ENCODE measurements at regions of chr9 and their contacts with region 1.

Region 1: GRCh38 chr9:34646211-34647083 is at the start of gene GALT:
- DNase-seq: peak; percentile 98
- H3K4me3 Mint-ChIP-seq: peak within 1 kb of the TSS; percentile 86
- H3K27ac Mint-ChIP-seq: peak within 1 kb of the TSS; percentile 83
- H3K4me1 Mint-ChIP-seq: peaks cover 18% of the 10 kb centered on the region
- H3K27me3 Mint-ChIP-seq: no peaks in the 10 kb centered on the region
- total RNA-seq, gene GALT: 42.0 to 44.6 TPM

Region 2: GRCh38 chr9:34570376-34570775 is 76.1 kb before region 1 on chr9:
- CTCF ChIA-PET with region 1: no interaction called
- intact Hi-C with region 1: no loop called
- DNase-seq: no peak
- H3K4me3 Mint-ChIP-seq: no peak overlapping the region
- H3K27ac Mint-ChIP-seq: no peak overlapping the region
- H3K4me1 Mint-ChIP-seq: no peaks in the 10 kb centered on the region
- H3K27me3 Mint-ChIP-seq: peaks cover 5% of the 10 kb centered on the region

Region 3: GRCh38 chr9:34686231-34686630 is 39.8 kb after region 1 on chr9:
- CTCF ChIA-PET with region 1: interaction called, 3 read pairs
- intact Hi-C with region 1: loop called (anchors 1 kb)
- DNase-seq: no peak
- H3K4me3 Mint-ChIP-seq: no peak overlapping the region
- H3K27ac Mint-ChIP-seq: no peak overlapping the region
- H3K4me1 Mint-ChIP-seq: peaks cover 9% of the 10 kb centered on the region
- H3K27me3 Mint-ChIP-seq: no peaks in the 10 kb centered on the region

Region 4: GRCh38 chr9:35071814-35072460 is 425.5 kb after region 1 on chr9:
- CTCF ChIA-PET with region 1: no interaction called
- intact Hi-C with region 1: loop called (anchors 5 kb)
- DNase-seq: peak; percentile 77
- H3K4me3 Mint-ChIP-seq: peak overlapping the region; percentile 92
- H3K27ac Mint-ChIP-seq: peak overlapping the region; percentile 96
- H3K4me1 Mint-ChIP-seq: peaks cover 57% of the 10 kb centered on the region
- H3K27me3 Mint-ChIP-seq: no peaks in the 10 kb centered on the region

Measured in activated naive CD4-positive, alpha-beta T cell treated with anti-CD3 and anti-CD28 coated beads for 36 hours (primary cell).